ENCODE measurements at regions of chr12 and their contacts with region 1.

Region 1: GRCh38 chr12:49358483-49359141 is 8.7 kb upstream of the SPATS2 start:
- DNase-seq: no peak
- H3K4me3 ChIP-seq: no peak overlapping the region
- CTCF ChIP-seq: peak; percentile 59

Region 2: GRCh38 chr12:49322708-49323523 is 35.7 kb before region 1 on chr12 and contains the start of gene TROAP:
- CTCF ChIA-PET with region 1: interaction called, 424 read pairs
- POLR2A ChIA-PET with region 1: no interaction called
- DNase-seq: peak; percentile 80
- H3K4me3 ChIP-seq: peak within 1 kb of the TSS; percentile 78
- CTCF ChIP-seq: no peak

Region 3: DNA sequence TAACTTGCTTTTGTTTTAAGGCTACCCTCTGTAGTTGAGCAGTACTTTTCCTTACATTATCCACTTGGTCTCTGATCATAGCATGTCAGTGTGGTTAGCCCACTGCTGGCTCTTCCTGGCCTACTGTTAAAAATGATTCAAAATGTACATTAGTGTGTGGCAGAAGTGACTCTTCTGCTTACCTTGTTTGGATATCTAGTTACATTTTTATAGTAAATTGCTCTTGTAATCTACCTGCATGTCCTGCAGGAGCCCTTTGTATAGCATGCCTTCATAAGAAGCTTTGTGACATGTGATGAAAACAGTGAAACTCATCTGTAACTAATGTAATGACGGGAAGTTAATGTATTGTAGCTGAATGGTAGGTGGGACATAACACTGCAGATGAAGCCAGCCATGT is 16.8 kb after region 1 on chr12:
- CTCF ChIA-PET with region 1: interaction called, 84 read pairs
- POLR2A ChIA-PET with region 1: no interaction called
- DNase-seq: no peak
- H3K4me3 ChIP-seq: no peak overlapping the region
- CTCF ChIP-seq: no peak

Region 4: DNA sequence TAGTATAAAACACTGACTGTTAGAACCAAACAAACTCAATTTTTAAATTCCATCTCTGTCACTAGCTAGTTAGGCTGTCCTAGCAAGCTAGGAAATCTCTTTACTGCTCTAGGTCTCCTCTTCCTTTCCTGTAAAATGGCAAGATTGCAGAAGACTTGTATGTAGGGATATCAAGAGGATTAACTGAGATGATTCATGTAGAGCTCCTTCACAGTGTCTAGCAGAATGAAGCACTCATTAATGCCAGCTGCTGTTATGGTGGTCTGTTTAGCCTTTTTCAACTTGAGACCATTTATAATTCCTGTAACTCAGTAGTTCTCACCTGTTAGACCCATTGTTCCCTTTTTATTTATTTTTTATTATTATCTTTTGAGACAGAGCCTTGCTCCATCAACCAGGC is 112.4 kb after region 1 on chr12:
- CTCF ChIA-PET with region 1: interaction called, 10 read pairs
- POLR2A ChIA-PET with region 1: no interaction called
- DNase-seq: no peak
- H3K4me3 ChIP-seq: no peak overlapping the region
- CTCF ChIP-seq: no peak

Region 5: DNA sequence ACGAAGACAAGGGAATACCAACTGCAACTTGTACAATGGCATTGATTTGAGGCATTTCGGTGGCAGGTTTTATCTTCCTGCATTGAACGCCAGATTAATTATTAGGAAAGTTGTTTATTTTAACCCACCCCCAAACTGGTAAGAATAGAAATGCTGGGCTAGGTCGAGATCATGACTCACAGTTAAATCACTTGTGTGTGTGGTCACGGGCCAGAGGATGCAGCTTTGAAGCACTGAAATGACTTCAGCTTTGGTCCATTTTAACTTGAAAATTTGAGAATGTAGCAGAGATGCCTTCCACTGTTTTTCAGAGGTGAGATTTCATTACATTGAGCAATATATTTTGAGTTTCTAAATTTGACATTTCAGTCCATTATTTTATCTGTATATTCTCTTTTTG is 156.7 kb after region 1 on chr12:
- CTCF ChIA-PET with region 1: interaction called, 1,125 read pairs
- POLR2A ChIA-PET with region 1: interaction called, 7 read pairs
- DNase-seq: no peak
- H3K4me3 ChIP-seq: no peak overlapping the region
- CTCF ChIP-seq: no peak

Region 6: DNA sequence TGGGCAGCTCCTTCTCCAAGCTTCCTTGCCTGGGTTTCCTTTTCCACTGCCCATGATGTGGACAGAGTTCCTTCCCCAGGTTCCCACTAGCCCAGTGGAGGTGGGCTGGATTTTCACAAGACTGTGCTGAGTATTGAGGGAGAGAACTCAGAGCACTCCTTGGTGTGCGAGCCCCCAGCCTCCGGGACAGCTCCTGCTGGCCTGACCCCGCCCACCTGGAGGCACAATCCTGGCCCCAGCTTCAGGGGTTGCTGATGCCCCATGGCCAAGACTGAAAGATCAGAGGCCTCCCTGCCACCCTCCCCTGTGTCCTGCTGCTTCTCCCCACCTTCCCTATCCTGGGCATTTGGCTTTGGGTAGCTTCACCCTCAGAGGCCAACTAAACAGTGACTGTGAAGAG is 187.9 kb after region 1 on chr12:
- CTCF ChIA-PET with region 1: interaction called, 25 read pairs
- POLR2A ChIA-PET with region 1: no interaction called
- DNase-seq: no peak
- H3K4me3 ChIP-seq: no peak overlapping the region
- CTCF ChIP-seq: no peak

Region 7: GRCh38 chr12:49580572-49581535 is 222.2 kb after region 1 on chr12:
- CTCF ChIA-PET with region 1: interaction called, 176 read pairs
- POLR2A ChIA-PET with region 1: no interaction called
- DNase-seq: peak; percentile 9
- H3K4me3 ChIP-seq: no peak overlapping the region
- CTCF ChIP-seq: peak; percentile 93

Measured in AG04449 (cell line).